Activated T-helper 1 cell treated with anti-CD3 and anti-CD28 coated beads, Interleukin-12 subunit alpha, Interleukin-12 subunit beta, Interleukin-2, Interleukin-4 antibody, amounts not matched to agents 30 ng/mL and 10 ng/mL and 1 ng/mL, durations not matched to agents 14 hours and 24 hours and 36 hours (primary cell): ENCODE measurements at regions of chr2 and their contacts with region 1.

Region 1: GRCh38 chr2:17719562-17720371 is 33.8 kb downstream of the SMC6 start:
- DNase-seq: no peak
- H3K4me3 Mint-ChIP-seq: no peak overlapping the region
- H3K27ac Mint-ChIP-seq: no peak overlapping the region
- H3K4me1 Mint-ChIP-seq: no peaks in the 10 kb centered on the region
- H3K27me3 Mint-ChIP-seq: no peaks in the 10 kb centered on the region

Region 2: DNA sequence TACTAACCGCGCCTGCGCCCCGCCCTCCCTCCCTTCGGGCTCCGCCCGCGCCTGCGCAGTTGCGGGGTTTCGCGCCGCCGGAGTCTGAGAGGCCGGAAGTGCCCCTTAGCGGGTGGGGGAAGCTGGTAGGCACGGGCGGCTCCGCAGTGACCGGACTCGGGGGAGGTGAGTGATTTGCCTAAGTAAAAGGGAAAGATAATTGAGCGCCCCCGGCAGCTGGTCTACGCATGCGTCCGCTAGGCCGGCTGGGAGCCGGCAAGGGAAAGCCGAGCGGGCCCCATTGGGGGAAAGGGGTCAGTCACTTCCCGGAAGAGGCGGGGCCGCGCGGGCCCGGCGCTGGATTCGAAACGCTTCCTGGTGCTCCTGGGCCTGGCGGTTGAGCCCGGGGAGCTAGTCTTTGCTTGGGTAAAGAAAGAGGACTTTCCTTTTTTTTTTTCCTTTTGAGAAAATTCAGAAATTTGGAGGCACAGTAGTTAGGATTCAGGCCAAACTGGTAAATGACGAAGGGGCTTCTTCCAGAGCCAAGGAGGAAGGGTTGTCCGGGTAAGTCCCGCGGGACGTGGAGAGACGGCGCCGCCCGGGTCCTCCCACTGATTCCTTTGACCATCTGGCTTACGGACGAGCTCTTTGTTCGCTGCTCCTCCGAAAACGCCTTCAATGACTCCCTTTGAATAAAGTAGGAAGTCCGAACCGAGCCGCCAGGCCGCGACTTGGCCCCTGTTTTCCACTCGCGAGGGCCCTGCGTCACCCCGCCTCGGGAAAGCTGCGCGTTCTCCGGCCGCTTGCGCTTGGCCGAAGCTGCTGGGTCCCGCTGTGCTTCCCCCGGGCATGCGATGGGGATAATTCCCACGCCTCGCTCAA is 34.3 kb after region 1 on chr2 and contains the starts of genes GEN1 and SMC6:
- intact Hi-C with region 1: loop called (anchors 2 kb)
- DNase-seq: peak; percentile 86
- H3K4me3 Mint-ChIP-seq: peak within 1 kb of the TSS; percentile 86
- H3K27ac Mint-ChIP-seq: peak within 1 kb of the TSS; percentile 78
- H3K4me1 Mint-ChIP-seq: peaks cover 69% of the 10 kb centered on the region
- H3K27me3 Mint-ChIP-seq: no peaks in the 10 kb centered on the region
- total RNA-seq, gene GEN1: 28.1 and 31.8 TPM in 2 replicates
- total RNA-seq, gene SMC6: 27.8 and 31.0 TPM in 2 replicates

Region 3: DNA sequence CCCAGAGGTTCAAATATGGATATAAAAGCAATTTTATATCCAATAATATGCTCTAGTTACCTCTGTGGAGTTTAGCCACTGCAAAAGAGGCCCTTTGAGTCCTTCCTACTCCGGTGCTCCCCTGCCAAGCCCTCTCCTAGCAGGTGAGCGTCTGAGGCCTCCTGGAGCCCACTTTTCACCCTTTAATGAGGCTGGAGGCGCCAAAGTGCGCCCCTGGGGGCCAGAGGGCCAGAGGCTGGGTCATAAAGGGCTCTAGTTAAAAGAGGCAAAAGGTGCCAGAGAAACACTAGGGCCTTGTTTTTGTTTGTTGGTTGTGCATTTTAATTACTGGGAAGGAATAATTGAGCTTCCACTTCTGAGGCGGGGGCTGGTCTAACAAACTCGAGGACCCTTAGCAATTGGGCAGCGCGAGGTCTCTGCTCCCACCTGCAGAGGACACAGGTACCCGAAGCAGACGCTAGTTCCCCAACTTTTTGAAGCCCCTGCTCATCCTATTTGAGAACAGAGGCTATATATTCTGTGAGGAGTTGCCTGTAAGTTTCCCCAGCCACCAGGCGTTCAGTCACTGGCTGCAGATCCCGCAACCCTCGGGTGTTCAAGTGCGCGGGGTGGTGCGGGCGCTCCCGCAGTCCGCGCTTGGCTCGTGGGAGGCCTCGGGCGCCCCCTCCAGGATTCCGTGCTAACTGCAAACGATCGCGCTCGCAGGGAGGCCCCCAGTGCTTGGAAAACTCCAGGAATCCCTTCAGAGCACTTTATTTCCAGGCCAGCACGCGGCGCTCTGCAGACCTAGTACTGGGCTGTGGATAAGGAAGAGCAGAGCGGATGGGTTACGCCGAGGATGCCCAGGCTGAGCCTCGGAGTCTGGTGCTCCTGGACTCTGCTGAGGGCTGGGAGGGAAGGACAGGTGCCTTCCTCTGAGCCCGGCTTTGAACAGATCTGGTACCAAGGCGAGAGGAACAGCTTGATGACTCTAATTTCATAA is 110.6 kb after region 1 on chr2:
- intact Hi-C with region 1: loop called (anchors 1 kb)
- DNase-seq: peak; percentile 16
- H3K4me3 Mint-ChIP-seq: peak overlapping the region; percentile 2
- H3K27ac Mint-ChIP-seq: no peak overlapping the region
- H3K4me1 Mint-ChIP-seq: peaks cover 6% of the 10 kb centered on the region
- H3K27me3 Mint-ChIP-seq: peaks cover 46% of the 10 kb centered on the region

Region 4: GRCh38 chr2:18149645-18150246 is 430.0 kb after region 1 on chr2:
- intact Hi-C with region 1: loop called (anchors 1 kb)
- DNase-seq: no peak
- H3K4me3 Mint-ChIP-seq: no peak overlapping the region
- H3K27ac Mint-ChIP-seq: no peak overlapping the region
- H3K4me1 Mint-ChIP-seq: no peaks in the 10 kb centered on the region
- H3K27me3 Mint-ChIP-seq: no peaks in the 10 kb centered on the region

Region 5: GRCh38 chr2:18178736-18179349 is 459.1 kb after region 1 on chr2:
- intact Hi-C with region 1: loop called (anchors 1 kb)
- DNase-seq: no peak
- H3K4me3 Mint-ChIP-seq: no peak overlapping the region
- H3K27ac Mint-ChIP-seq: no peak overlapping the region
- H3K4me1 Mint-ChIP-seq: no peaks in the 10 kb centered on the region
- H3K27me3 Mint-ChIP-seq: no peaks in the 10 kb centered on the region